Colonic mucosa (tissue), 4 donors: ENCODE measurements at regions of chr1 and their contacts with region 1.

Region 1: GRCh38 chr1:231806623-231807495 is 180.3 kb downstream of the DISC1 start:
- DNase-seq: peak; percentile 57
- H3K4me3 ChIP-seq: no peak overlapping the region
- H3K27ac ChIP-seq: no peak overlapping the region
- H3K4me1 ChIP-seq: no peaks in the 10 kb centered on the region
- H3K27me3 ChIP-seq: no peaks in the 10 kb centered on the region
- CTCF ChIP-seq: peak; percentile 56

Region 2: GRCh38 chr1:231757101-231757404 is 49.8 kb before region 1 on chr1:
- intact Hi-C with region 1: loop called (anchors 2 kb)
- DNase-seq: no peak
- H3K4me3 ChIP-seq: no peak overlapping the region
- H3K27ac ChIP-seq: no peak overlapping the region
- H3K4me1 ChIP-seq: no peaks in the 10 kb centered on the region
- H3K27me3 ChIP-seq: no peaks in the 10 kb centered on the region
- CTCF ChIP-seq: no peak